ENCODE measurements at regions of chr2 and their contacts with region 1.

Region 1: DNA sequence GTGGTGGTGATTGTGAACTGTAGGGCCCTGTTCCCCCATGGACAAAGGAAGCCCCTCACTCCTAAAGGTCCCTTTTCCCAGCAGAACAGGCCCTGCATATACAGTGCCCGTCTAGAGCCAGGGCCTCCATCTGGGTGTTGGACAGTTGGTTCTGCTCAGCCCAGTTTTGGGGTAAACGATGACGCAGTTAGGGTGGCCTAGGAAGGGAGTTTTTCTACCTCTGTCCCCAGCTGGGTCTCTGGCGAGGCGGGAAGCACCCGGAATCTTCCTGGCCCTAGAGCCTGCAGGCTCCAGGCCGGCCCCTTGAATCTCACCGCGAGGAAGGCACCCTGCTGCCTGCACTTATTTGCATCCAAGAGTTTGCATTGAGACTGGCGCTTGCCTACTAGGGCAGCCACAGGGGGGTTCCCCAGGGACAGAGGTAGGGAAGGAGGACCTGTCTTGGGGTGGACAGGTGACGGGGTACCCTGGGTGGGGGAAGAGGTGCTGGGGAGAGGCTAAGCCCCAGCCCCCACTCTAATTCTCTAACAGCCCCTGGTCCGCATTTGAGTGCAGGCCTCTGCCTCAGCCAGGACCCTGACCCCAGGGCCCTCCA is 529 bp upstream of the MTA3 start:
- DNase-seq: peak in 2 of 5 donors; percentile 0 to 5
- H3K4me3 ChIP-seq: no peak overlapping the region
- H3K4me3 Mint-ChIP-seq: peak overlapping the region; percentile 56 to 87 (median 76)
- H3K27ac ChIP-seq: no peak overlapping the region
- H3K27ac Mint-ChIP-seq: peak overlapping the region in 6 of 7 donors; percentile 6 to 84 (median 76)
- H3K4me1 ChIP-seq: peaks cover 9% of the 10 kb centered on the region
- H3K4me1 Mint-ChIP-seq: peaks cover 9 to 21% (median 14%) of the 10 kb centered on the region in 4 donors
- H3K27me3 ChIP-seq: no peaks in the 10 kb centered on the region
- H3K27me3 Mint-ChIP-seq: no peaks in the 10 kb centered on the region

Region 2: DNA sequence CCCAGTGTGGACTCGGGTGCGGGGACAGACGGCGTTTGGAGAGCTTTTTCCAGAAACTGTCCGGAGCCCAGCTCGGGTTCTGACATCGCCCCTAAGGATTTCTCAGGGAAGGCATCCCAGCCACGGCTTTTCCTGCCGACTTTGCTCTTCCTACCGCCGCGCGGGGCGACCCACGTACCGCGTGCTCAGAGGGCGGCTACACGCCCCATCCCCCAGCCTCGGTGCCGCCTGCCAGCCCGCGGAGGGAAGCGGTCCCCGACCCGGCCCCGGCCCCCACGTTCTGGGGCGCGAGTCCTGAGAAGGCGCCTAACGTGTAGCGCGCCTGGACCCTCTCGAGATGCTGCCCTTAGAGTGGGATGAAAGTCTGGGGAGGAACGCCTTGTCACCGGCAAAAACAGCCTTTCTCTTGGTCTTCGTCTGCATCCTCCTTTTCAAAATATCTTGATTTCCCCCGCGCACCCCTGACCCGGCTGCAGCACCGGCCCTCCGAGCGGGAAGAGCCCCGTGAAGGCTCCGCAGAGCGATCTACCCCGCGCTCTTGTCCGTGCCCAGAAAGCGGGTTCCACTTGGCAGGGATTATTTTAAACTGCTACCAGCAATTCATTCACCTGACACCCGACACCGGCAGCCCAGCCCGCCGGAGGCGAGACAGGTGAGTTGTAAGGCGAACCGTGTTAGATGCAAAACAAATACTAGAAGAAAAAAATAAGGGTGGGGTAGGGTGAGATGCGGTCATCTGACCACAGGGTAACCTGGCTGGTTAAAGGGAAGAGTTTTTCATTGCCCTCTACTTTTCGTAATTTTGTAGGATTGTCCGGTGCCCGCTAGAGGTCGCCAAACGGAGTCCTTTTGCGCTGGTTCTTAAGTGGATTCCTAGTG is 73.3 kb before region 1 on chr2:
- CTCF ChIA-PET with region 1: no interaction called
- POLR2A ChIA-PET with region 1: no interaction called
- intact Hi-C with region 1: loop called (anchors 2 kb)
- DNase-seq: peak; percentile 69 to 74 (median 70)
- H3K4me3 ChIP-seq: peak overlapping the region; percentile 66 to 77
- H3K4me3 Mint-ChIP-seq: peak overlapping the region; percentile 91 to 98 (median 94)
- H3K27ac ChIP-seq: no peak overlapping the region
- H3K27ac Mint-ChIP-seq: peak overlapping the region in 5 of 7 donors; percentile 44 to 79 (median 69)
- H3K4me1 ChIP-seq: no peaks in the 10 kb centered on the region
- H3K4me1 Mint-ChIP-seq: peaks cover 2 to 15% (median 7%) of the 10 kb centered on the region in 4 donors
- H3K27me3 ChIP-seq: peaks cover 9% of the 10 kb centered on the region
- H3K27me3 Mint-ChIP-seq: peaks cover 11 to 22% of the 10 kb centered on the region in 2 donors

Measured in CD4-positive, alpha-beta memory T cell (primary cell).